Mucosa of descending colon (tissue), 3 donors: ENCODE measurements at regions of chr13 and their contacts with region 1.

Region 1: DNA sequence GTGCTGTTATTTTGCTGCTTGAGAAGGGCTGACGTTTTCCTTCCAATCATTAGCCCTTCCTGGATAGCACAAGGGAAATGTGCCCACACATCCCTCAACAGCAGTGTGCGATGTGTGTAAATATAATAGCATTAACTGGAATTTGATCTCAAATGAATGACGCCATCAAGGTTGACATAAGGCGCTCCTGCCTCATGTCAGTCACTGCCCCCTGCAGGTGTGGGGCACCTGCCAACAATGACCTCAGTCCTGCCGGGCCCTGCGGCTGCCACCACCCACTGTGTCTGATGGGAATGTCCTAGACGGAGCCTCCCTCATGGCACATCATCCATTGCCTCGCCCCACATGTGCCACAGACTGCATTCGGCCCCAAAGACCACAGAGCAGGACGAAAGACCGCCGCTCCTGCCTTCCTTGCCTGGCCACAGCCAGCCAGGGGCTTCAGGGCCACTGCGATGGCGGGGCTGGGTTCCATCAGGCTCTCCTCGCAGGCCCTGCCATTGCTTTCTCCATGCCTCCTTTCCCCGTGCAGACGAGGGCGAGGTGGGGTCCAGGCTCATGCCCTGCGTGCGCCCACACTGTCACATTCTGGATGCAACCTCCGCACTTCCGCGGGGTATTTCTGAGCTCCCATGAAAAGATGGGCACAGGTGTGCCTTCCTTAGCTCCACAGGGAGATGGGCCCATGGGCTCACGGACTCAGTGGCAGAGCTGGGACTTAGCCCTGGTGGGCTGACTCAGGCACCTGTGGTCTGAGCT is 146.7 kb downstream of the SOX1 start:
- DNase-seq: peak; percentile 79 to 89 (median 86)
- ATAC-seq: peak; percentile 99
- H3K4me3 ChIP-seq: no peak overlapping the region
- H3K4me1 ChIP-seq: no peaks in the 10 kb centered on the region
- CTCF ChIP-seq: peak; percentile 13

Region 2: DNA sequence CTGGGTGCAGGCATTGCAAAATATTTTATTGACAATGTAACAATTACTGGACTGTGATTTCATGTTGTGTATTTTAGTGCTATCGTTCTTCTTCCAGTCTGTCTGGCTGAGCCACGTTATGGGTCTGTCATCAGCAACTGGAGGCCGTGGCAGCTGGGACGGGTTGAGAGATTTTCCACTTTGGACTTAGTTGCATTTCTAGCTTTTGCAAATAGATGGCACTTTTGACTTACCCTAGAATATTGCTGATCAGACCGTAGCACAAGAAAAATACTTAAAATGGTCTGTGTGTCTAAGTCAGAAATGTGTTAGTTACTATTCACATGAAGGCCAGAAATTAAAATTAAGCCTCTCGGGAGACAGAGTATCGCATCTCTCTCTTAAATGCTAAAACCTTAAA is 682.1 kb before region 1 on chr13:
- intact Hi-C with region 1: no loop called
- DNase-seq: no peak
- ATAC-seq: no peak
- H3K4me3 ChIP-seq: no peak overlapping the region
- H3K4me1 ChIP-seq: no peaks in the 10 kb centered on the region
- CTCF ChIP-seq: no peak

Region 3: DNA sequence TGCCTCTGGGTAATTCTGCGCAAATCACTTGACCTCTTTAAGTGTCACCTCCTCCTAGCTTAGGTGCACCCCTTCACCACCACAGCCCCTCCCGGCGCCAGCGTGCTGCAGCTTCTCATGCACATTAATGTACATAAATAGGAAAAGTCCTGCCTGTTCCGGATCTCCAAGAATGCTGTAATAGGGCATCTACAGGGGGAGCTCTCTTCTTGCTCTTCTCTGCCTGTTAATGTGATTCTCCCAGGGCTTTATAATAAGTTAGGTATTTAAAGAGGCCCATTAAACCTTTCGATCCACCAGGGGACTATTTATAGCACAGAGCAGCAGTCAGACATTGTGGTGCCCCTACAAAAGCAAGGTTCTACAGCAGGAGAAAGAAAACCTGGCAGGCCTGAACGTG is 111.4 kb before region 1 on chr13:
- intact Hi-C with region 1: loop called in 1 of 2 experiments (anchors 5 kb)
- DNase-seq: peak in 2 of 3 donors; percentile 19 to 55
- ATAC-seq: peak; percentile 71
- H3K4me3 ChIP-seq: no peak overlapping the region
- H3K4me1 ChIP-seq: peaks cover 8% of the 10 kb centered on the region
- CTCF ChIP-seq: no peak